Naive thymus-derived CD4-positive, alpha-beta T cell (primary cell): ENCODE measurements at regions of chr13 and their contacts with region 1.

Region 1: DNA sequence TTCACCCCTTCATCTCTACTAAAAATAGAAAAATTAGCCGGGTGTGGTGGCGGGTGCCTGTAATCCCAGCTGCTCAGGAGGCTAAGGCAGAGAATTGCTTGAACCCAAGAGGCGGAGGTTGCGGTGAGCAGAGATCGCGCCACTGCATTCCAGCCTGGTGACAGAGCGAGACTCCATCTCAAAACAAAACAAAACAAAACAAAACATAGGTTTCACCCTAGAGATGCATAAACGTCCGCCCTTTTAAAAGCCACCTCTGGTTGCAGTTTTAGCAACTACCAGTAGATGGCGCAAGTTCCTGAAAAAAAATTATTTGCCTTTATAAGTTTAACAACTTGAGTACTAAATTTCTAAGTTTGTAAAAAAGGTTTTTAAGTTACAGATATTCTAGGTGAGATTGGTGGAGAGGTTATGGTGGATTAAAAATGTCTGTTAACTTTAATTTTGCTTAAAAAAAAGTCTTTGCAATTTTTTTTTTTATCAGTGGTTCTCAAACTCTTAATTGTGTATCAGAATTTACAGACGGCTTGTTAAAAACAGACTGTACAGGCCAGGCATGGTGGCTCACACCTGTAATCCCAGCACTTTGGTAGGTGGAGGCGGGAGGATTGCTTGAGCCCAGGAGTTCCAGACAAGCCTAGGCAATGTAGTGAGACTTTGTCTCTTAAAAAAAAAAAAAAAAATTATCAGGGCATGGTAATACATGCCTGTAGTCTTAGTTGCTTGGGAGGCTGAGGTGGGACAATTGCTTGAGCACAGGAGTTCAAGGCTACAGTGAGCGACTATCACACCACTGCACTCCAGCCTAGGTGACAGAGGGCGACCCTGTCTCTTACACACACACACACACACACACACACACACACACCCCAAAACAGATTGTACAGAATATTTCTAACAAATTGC is 42.1 kb downstream of the NAA16 start:
- DNase-seq: peak; percentile 15 to 74 (median 66)
- ATAC-seq: peak; percentile 80
- H3K4me3 ChIP-seq: no peak overlapping the region
- H3K4me3 Mint-ChIP-seq: peak overlapping the region in 9 of 10 donors; percentile 19 to 80 (median 53)
- H3K27ac ChIP-seq: peak overlapping the region; percentile 68
- H3K27ac Mint-ChIP-seq: peak overlapping the region; percentile 73 to 96 (median 88)
- H3K4me1 ChIP-seq: peaks cover 34 to 52% of the 10 kb centered on the region in 2 donors
- H3K4me1 Mint-ChIP-seq: peaks cover 24 to 72% (median 59%) of the 10 kb centered on the region in 7 donors
- H3K27me3 ChIP-seq: no peaks in the 10 kb centered on the region
- H3K27me3 Mint-ChIP-seq: no peaks in the 10 kb centered on the region

Region 2: DNA sequence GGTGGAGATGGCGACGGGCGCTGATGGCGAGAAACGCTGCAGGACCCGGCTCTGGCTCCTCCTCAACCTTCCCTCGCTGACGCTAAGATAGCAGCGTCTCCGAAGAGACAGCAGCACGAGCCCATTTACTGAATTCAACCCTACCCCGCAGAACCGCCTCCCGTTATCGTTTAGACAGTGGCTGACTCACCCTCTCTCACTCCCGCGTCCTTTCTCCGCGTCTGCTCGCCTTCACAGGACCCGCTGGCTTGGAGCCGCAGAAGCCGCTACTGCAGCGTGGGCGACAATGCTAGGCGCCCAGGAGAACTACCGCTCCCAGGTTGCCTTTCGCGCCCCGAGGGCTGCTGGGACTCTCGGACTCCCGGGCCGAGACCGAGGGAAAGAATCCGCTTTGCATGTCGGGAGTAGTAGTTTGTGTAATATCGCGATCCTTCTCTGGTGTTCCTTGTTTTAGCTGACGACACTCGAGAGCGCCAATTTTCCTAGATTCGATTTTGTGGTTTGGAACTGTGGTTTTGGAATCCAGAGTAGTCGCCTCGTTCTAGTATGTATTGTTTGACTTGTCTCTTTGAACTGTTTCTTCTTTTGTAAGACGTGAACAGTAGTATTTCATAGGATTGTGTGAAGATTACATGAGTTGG is 220.6 kb before region 1 on chr13 and contains the start of gene KBTBD6:
- CTCF ChIA-PET with region 1: no interaction called
- POLR2A ChIA-PET with region 1: no interaction called
- intact Hi-C with region 1: loop called in 1 of 2 experiments (anchors 5 kb)
- DNase-seq: peak; percentile 76 to 93 (median 87)
- ATAC-seq: peak; percentile 98
- H3K4me3 ChIP-seq: peak within 1 kb of the TSS; percentile 77
- H3K4me3 Mint-ChIP-seq: peak within 1 kb of the TSS; percentile 94 to 99 (median 98)
- H3K27ac ChIP-seq: peak within 1 kb of the TSS; percentile 67
- H3K27ac Mint-ChIP-seq: peak within 1 kb of the TSS; percentile 91 to 97 (median 93)
- H3K4me1 ChIP-seq: peaks cover 15 to 24% of the 10 kb centered on the region in 2 donors
- H3K4me1 Mint-ChIP-seq: peaks cover 32 to 60% (median 54%) of the 10 kb centered on the region in 7 donors
- H3K27me3 ChIP-seq: no peaks in the 10 kb centered on the region
- H3K27me3 Mint-ChIP-seq: no peaks in the 10 kb centered on the region
- total RNA-seq, gene KBTBD6: 3.9 to 9.2 (median 7.7) TPM

Region 3: GRCh38 chr13:41384755-41385503 is 31.7 kb after region 1 on chr13:
- CTCF ChIA-PET with region 1: interaction called, 5 read pairs
- POLR2A ChIA-PET with region 1: interaction called, 3 read pairs
- intact Hi-C with region 1: loop called (anchors 1 to 5 kb)
- DNase-seq: no peak
- ATAC-seq: no peak
- H3K4me3 ChIP-seq: no peak overlapping the region
- H3K4me3 Mint-ChIP-seq: no peak overlapping the region
- H3K27ac ChIP-seq: no peak overlapping the region
- H3K27ac Mint-ChIP-seq: peak overlapping the region in 3 of 9 donors; percentile 10 to 60 (median 25)
- H3K4me1 ChIP-seq: peaks cover 0 to 10% of the 10 kb centered on the region in 2 donors
- H3K4me1 Mint-ChIP-seq: peaks cover 11 to 56% (median 20%) of the 10 kb centered on the region in 7 donors
- H3K27me3 ChIP-seq: no peaks in the 10 kb centered on the region
- H3K27me3 Mint-ChIP-seq: peaks cover 0 to 3% (median 0%) of the 10 kb centered on the region in 5 donors

Region 4: GRCh38 chr13:41465241-41465847 is 112.2 kb after region 1 on chr13:
- CTCF ChIA-PET with region 1: interaction called, 3 read pairs
- POLR2A ChIA-PET with region 1: interaction called, 19 read pairs
- intact Hi-C with region 1: loop called in 1 of 2 experiments (anchors 1 kb)
- DNase-seq: peak; percentile 63 to 90 (median 89)
- ATAC-seq: peak; percentile 72
- H3K4me3 ChIP-seq: peak overlapping the region; percentile 51
- H3K4me3 Mint-ChIP-seq: peak overlapping the region; percentile 89 to 98 (median 94)
- H3K27ac ChIP-seq: peak overlapping the region; percentile 97
- H3K27ac Mint-ChIP-seq: peak overlapping the region; percentile 96 to 100 (median 99)
- H3K4me1 ChIP-seq: peaks cover 64 to 87% of the 10 kb centered on the region in 2 donors
- H3K4me1 Mint-ChIP-seq: peaks cover 64 to 98% (median 93%) of the 10 kb centered on the region in 7 donors
- H3K27me3 ChIP-seq: no peaks in the 10 kb centered on the region
- H3K27me3 Mint-ChIP-seq: no peaks in the 10 kb centered on the region

Region 5: DNA sequence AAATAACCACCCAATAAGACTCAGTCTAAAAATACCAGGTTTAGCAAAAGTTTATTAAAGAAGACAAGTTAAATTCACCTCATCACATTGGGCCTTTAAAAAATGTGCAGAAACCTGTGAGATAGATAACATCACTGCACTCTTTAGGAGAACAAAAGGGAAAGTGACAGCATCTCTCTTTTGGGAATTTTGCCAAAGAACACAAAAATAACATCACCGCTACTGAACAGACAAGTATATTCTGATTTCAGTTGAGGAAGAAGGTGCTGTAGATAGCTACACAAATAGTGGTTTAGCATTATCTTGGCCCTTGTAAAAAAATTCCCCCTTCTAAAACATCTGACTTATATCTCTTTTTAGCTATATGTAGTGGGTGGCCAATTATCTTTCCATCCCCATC is 363.0 kb after region 1 on chr13:
- CTCF ChIA-PET with region 1: no interaction called
- POLR2A ChIA-PET with region 1: no interaction called
- intact Hi-C with region 1: loop called in 1 of 2 experiments (anchors 5 kb)
- DNase-seq: no peak
- ATAC-seq: no peak
- H3K4me3 ChIP-seq: no peak overlapping the region
- H3K4me3 Mint-ChIP-seq: no peak overlapping the region
- H3K27ac ChIP-seq: no peak overlapping the region
- H3K27ac Mint-ChIP-seq: no peak overlapping the region
- H3K4me1 ChIP-seq: no peaks in the 10 kb centered on the region
- H3K4me1 Mint-ChIP-seq: peaks cover 0 to 2% (median 0%) of the 10 kb centered on the region in 7 donors
- H3K27me3 ChIP-seq: no peaks in the 10 kb centered on the region
- H3K27me3 Mint-ChIP-seq: no peaks in the 10 kb centered on the region

Region 6: GRCh38 chr13:42048682-42049453 is 695.7 kb after region 1 on chr13:
- CTCF ChIA-PET with region 1: no interaction called
- POLR2A ChIA-PET with region 1: no interaction called
- intact Hi-C with region 1: loop called (anchors 5 kb)
- DNase-seq: peak; percentile 20 to 81 (median 43)
- ATAC-seq: peak; percentile 81
- H3K4me3 ChIP-seq: peak overlapping the region; percentile 84
- H3K4me3 Mint-ChIP-seq: peak overlapping the region; percentile 83 to 96 (median 92)
- H3K27ac ChIP-seq: peak overlapping the region; percentile 67
- H3K27ac Mint-ChIP-seq: peak overlapping the region in 2 of 9 donors; percentile 74 to 78
- H3K4me1 ChIP-seq: peaks cover 5 to 9% of the 10 kb centered on the region in 2 donors
- H3K4me1 Mint-ChIP-seq: peaks cover 6 to 38% (median 15%) of the 10 kb centered on the region in 7 donors
- H3K27me3 ChIP-seq: no peaks in the 10 kb centered on the region
- H3K27me3 Mint-ChIP-seq: peaks cover 0 to 15% (median 0%) of the 10 kb centered on the region in 5 donors